ENCODE measurements at regions of chr7 and their contacts with region 1.

Region 1: DNA sequence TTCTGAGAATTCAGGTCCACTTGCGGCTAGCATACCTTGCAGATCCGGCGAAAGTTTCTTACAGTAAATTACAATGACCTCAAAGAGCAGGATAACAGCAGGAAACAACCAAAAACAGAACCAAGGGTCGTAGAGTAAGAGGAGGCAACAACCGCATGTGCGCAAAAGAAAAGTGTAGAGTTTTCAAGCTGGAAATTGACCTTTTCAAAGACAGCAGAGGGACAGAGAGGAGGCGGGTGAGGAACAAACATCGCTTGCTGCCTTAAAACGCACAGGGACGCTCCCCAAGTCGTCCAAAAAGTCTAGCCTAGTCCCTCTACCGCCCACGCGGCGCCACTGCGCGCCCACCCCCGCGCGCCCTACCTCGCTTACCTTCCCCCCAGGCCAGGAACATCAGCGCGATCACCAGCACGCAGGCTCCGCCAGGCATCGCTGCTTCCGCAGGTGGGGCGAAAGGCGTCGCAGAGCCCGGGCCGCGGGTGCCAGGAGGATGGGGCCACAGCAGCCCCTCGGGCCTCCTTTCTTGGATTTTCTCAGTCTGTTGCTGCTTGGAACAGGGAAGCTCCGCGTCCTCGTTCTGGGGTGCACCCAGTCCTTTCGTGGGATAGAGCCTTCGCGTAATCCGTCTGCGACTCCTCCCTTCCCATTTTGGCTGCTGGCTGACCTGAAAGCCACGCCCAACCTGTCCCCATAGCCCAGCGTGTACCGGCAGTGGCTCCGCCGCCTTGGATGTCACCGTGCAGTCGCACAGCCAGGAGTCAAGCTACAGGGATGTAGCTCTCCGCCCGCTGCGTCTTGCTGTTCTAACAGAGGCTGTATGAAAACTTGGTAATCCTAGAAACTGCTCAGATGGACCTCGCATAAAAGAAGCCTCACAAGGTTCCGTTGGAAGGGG is at the start of gene VWDE:
- DNase-seq: peak; percentile 34
- H3K4me3 ChIP-seq: peak within 1 kb of the TSS; percentile 36 to 70 (median 67)
- H3K27ac ChIP-seq: no peak within 1 kb of the TSS
- H3K4me1 ChIP-seq: peaks cover 5% of the 10 kb centered on the region
- H3K27me3 ChIP-seq: peaks cover 5 to 34% of the 10 kb centered on the region in 2 experiments
- CTCF ChIP-seq: peak in 1 of 2 donors; percentile 6
- POLR2A ChIP-seq: no peak
- total RNA-seq, gene VWDE: 0.09 and 0.11 TPM in 2 replicates

Region 2: GRCh38 chr7:12351843-12352242 is 51.7 kb before region 1 on chr7:
- CTCF ChIA-PET with region 1: no interaction called
- POLR2A ChIA-PET with region 1: no interaction called
- dilution Hi-C with region 1: no loop called
- intact Hi-C with region 1: no loop called
- DNase-seq: no peak
- H3K4me3 ChIP-seq: no peak overlapping the region
- H3K27ac ChIP-seq: no peak overlapping the region
- H3K4me1 ChIP-seq: no peaks in the 10 kb centered on the region
- H3K27me3 ChIP-seq: no peaks in the 10 kb centered on the region
- CTCF ChIP-seq: no peak
- POLR2A ChIP-seq: no peak

Region 3: DNA sequence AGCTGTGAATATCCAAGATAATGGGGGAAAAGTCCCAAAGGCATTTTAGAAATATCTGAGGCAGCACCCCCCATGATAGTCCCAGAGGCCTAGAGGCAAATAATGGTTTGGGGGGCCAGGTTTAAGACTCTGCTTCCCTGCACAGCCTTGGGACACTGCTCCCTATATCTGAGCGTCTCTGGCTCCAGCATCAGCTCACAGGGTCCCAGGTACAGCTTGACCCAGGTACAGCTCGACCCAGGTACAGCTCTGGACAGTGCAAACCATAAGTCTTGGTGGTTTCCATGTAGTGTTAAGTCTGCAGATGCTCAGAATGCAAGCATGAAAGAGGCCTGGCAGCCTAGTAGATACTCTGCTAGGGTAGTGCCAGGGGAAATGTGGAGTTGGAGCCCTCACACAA is 47.1 kb after region 1 on chr7:
- CTCF ChIA-PET with region 1: no interaction called
- POLR2A ChIA-PET with region 1: no interaction called
- dilution Hi-C with region 1: no loop called
- intact Hi-C with region 1: loop called (anchors 2 kb)
- DNase-seq: no peak
- H3K4me3 ChIP-seq: no peak overlapping the region
- H3K27ac ChIP-seq: no peak overlapping the region
- H3K4me1 ChIP-seq: no peaks in the 10 kb centered on the region
- H3K27me3 ChIP-seq: peaks cover 0 to 5% of the 10 kb centered on the region in 2 experiments
- CTCF ChIP-seq: no peak
- POLR2A ChIP-seq: no peak

Measured in endothelial cell of umbilical vein (primary cell).